ENCODE measurements at regions of chr16 and their contacts with region 1.

Region 1: GRCh38 chr16:66406534-66407221 is 20.4 kb upstream of the BEAN1 start:
- DNase-seq: peak; percentile 74 to 88
- H3K4me3 ChIP-seq: peak overlapping the region; percentile 34
- H3K4me3 Mint-ChIP-seq: peak overlapping the region; percentile 75
- H3K27ac Mint-ChIP-seq: no peak overlapping the region
- H3K4me1 ChIP-seq: peaks cover 15% of the 10 kb centered on the region; the same call in 1 of the 2 replicates
- H3K4me1 Mint-ChIP-seq: peaks cover 9% of the 10 kb centered on the region
- H3K27me3 ChIP-seq: no peaks in the 10 kb centered on the region
- H3K27me3 Mint-ChIP-seq: peaks cover 7% of the 10 kb centered on the region
- CTCF ChIP-seq: peak; percentile 81 to 93

Region 2: DNA sequence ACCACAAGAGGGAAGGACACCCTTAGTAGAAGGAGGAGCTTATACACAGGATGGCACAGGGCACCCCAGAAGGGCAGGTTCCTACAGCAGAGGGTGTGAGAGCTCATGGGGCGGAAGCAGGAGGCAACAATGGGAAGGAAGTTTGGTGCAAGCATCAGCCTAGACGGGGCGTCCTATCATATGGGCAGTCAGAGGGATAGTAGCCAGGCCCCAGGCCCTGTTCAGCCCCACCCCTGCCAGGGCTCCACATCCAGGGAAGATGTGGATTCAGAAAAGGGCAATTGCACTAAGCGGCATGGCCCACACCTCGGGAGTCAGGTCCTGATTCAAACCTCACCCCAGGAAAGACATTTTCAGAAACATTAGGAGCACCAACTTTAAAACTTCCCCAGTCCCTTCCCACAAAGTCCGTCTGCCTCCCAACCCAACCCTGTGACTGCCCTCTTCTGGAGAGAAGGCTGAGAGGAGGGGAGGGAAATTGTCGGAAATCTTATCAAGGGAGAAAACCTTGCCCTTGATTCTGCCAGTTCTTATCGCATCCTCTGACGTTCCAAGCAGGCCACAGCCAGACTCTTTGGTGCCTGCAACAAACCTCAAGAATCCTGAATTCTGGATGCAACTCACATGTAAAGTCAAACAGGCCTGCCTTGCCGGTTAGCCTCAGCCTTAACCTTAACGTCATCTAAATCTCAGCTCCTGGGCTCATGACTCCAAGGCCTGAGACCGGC is 238.9 kb before region 1 on chr16:
- CTCF ChIA-PET with region 1: no interaction called
- POLR2A ChIA-PET with region 1: no interaction called
- intact Hi-C with region 1: no loop called
- DNase-seq: peak in 1 of 2 experiments; percentile 40
- H3K4me3 ChIP-seq: no peak overlapping the region
- H3K4me3 Mint-ChIP-seq: no peak overlapping the region
- H3K27ac Mint-ChIP-seq: no peak overlapping the region
- H3K4me1 ChIP-seq: peaks cover 7% of the 10 kb centered on the region; the same call in 1 of the 2 replicates
- H3K4me1 Mint-ChIP-seq: peaks cover 5% of the 10 kb centered on the region
- H3K27me3 ChIP-seq: no peaks in the 10 kb centered on the region
- H3K27me3 Mint-ChIP-seq: no peaks in the 10 kb centered on the region
- CTCF ChIP-seq: peak; percentile 20 to 40

Region 3: GRCh38 chr16:66444049-66444481 is 37.4 kb after region 1 on chr16:
- CTCF ChIA-PET with region 1: interaction called, 9 read pairs
- POLR2A ChIA-PET with region 1: no interaction called
- intact Hi-C with region 1: loop called (anchors 5 kb)
- DNase-seq: no peak
- H3K4me3 ChIP-seq: no peak overlapping the region
- H3K4me3 Mint-ChIP-seq: no peak overlapping the region
- H3K27ac Mint-ChIP-seq: no peak overlapping the region
- H3K4me1 ChIP-seq: no peaks in the 10 kb centered on the region
- H3K4me1 Mint-ChIP-seq: no peaks in the 10 kb centered on the region
- H3K27me3 ChIP-seq: no peaks in the 10 kb centered on the region
- H3K27me3 Mint-ChIP-seq: peaks cover 22% of the 10 kb centered on the region
- CTCF ChIP-seq: peak; percentile 21 to 38

Region 4: DNA sequence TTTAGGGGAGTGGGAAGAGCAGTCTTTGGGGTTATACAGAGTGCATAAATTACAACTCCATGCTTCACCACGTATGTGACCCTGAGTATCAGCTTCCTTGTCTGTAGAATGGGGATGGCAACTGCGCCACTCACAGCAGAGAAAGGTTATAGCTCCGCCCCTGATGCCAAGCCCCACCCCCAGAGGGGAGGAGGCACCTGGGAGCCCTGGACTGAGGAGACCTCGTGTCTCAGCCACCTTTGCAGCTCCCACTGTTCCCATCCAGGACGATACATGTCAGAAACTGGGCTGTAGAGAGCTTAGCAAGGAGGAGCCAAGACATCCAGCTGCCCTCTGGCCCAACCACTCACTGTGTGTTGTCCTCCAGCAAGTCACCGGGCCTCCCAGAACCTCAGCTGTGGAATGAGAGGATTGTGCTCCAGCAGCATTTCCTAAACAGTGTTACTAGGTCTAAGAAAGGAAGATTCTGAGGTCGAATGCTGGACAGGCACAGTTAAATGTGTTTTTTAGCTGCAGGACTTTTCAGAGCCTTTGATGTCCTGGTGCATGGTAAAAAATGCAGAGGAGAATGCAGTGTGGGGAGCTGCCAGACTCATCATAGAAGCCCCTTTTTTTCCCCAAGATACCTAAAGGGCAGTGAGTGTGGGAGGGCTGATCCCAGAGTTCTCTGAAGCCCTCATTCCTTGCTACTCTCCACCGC is 69.8 kb after region 1 on chr16:
- CTCF ChIA-PET with region 1: interaction called, 14 read pairs
- POLR2A ChIA-PET with region 1: no interaction called
- intact Hi-C with region 1: no loop called
- DNase-seq: peak in 1 of 2 experiments; percentile 51
- H3K4me3 ChIP-seq: no peak overlapping the region
- H3K4me3 Mint-ChIP-seq: no peak overlapping the region
- H3K27ac Mint-ChIP-seq: no peak overlapping the region
- H3K4me1 ChIP-seq: peaks cover 13% of the 10 kb centered on the region; the same call in 1 of the 2 replicates
- H3K4me1 Mint-ChIP-seq: no peaks in the 10 kb centered on the region
- H3K27me3 ChIP-seq: peaks cover 3% of the 10 kb centered on the region; the same call in 1 of the 2 replicates
- H3K27me3 Mint-ChIP-seq: peaks cover 9% of the 10 kb centered on the region
- CTCF ChIP-seq: no peak

Region 5: GRCh38 chr16:66588981-66589713 is 182.5 kb after region 1 on chr16:
- CTCF ChIA-PET with region 1: interaction called, 14 read pairs
- POLR2A ChIA-PET with region 1: no interaction called
- intact Hi-C with region 1: loop called (anchors 5 kb)
- DNase-seq: peak in 1 of 2 experiments; percentile 48
- H3K4me3 ChIP-seq: no peak overlapping the region
- H3K4me3 Mint-ChIP-seq: no peak overlapping the region
- H3K27ac Mint-ChIP-seq: no peak overlapping the region
- H3K4me1 ChIP-seq: no peaks in the 10 kb centered on the region
- H3K4me1 Mint-ChIP-seq: no peaks in the 10 kb centered on the region
- H3K27me3 ChIP-seq: no peaks in the 10 kb centered on the region
- H3K27me3 Mint-ChIP-seq: no peaks in the 10 kb centered on the region
- CTCF ChIP-seq: peak; percentile 33 to 76